ENCODE measurements at regions of chr11 and their contacts with region 1.

Region 1: GRCh38 chr11:62645956-62646824 is at the start of gene GANAB:
- DNase-seq: peak; percentile 100
- H3K4me3 ChIP-seq: peak within 1 kb of the TSS; percentile 63 to 98 (median 86)
- H3K27ac ChIP-seq: peak within 1 kb of the TSS; percentile 89 to 96 (median 94)
- H3K4me1 ChIP-seq: peaks cover 0 to 32% (median 23%) of the 10 kb centered on the region in 4 donors
- H3K27me3 ChIP-seq: no peaks in the 10 kb centered on the region
- CTCF ChIP-seq: no peak
- EP300 ChIP-seq: no peak
- POLR2A ChIP-seq: peak; percentile 81 to 86
- total RNA-seq, gene GANAB: 67.4 to 111 (median 77.9) TPM

Region 2: DNA sequence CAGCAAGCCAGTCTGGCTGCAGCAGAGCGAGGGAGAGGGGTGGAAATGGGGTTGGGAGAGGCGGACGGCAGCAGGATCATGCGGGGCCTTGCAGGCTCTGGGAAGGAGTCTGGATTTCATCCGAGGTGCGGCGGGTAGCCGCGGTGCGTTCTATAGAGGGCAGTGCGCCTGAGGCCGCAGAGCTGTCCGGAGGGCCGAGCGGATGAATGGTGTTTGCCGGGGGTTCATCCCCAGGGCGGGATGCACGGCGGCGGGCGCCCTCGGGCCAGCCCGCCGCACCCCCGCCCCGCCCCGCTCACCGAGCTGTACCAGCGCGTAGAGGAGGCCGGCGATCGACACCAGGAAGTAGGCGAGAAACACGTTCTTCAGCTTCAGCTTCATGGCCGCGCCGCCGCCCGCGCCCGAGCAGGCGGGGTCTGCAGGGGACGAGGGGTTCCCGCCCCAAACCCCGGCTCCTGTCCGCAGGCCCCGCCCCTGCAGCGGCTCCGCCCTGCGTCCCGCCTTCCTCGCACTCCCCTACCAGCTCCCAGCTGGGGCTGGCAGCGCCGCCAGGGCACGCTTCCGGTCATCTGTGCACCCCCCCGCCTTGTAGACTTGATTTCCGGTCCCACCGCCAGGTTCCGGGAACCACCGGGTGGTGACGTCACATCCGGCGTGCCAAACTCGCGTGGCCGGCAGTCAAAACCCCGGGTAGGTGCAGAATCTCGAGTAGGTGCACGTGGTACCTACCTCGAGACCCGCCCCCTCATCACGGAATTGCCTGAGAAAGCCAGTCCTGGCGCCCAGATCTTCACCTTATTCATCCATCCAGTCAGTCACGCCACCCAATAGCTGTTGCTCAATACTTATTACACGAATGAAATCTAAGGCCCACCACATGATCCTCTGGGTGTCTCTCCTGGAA is 24.4 kb before region 1 on chr11 and contains the start of gene B3GAT3:
- intact Hi-C with region 1: loop called (anchors 2 kb)
- DNase-seq: peak; percentile 99
- H3K4me3 ChIP-seq: peak within 1 kb of the TSS; percentile 60 to 87 (median 74)
- H3K27ac ChIP-seq: peak within 1 kb of the TSS; percentile 84 to 93 (median 90)
- H3K4me1 ChIP-seq: peaks cover 0 to 23% (median 19%) of the 10 kb centered on the region in 4 donors
- H3K27me3 ChIP-seq: no peaks in the 10 kb centered on the region
- CTCF ChIP-seq: no peak
- EP300 ChIP-seq: peak in 2 of 4 donors; percentile 53 to 88
- POLR2A ChIP-seq: peak; percentile 76
- total RNA-seq, gene B3GAT3: 11.1 to 26.3 (median 16.8) TPM

Region 3: GRCh38 chr11:62665075-62665598 is 18.9 kb after region 1 on chr11 and contains the starts of genes C11orf98 and CSKMT:
- intact Hi-C with region 1: loop called (anchors 2 kb)
- DNase-seq: peak; percentile 98
- H3K4me3 ChIP-seq: peak within 1 kb of the TSS; percentile 74 to 89 (median 86)
- H3K27ac ChIP-seq: peak within 1 kb of the TSS; percentile 91 to 97 (median 94)
- H3K4me1 ChIP-seq: peaks cover 0 to 40% (median 34%) of the 10 kb centered on the region in 4 donors
- H3K27me3 ChIP-seq: no peaks in the 10 kb centered on the region
- CTCF ChIP-seq: no peak
- EP300 ChIP-seq: no peak
- POLR2A ChIP-seq: peak; percentile 99
- total RNA-seq, gene C11orf98: 24.6 to 47.4 (median 26.9) TPM
- total RNA-seq, gene CSKMT: 2.9 to 6.1 (median 4.0) TPM

Region 4: DNA sequence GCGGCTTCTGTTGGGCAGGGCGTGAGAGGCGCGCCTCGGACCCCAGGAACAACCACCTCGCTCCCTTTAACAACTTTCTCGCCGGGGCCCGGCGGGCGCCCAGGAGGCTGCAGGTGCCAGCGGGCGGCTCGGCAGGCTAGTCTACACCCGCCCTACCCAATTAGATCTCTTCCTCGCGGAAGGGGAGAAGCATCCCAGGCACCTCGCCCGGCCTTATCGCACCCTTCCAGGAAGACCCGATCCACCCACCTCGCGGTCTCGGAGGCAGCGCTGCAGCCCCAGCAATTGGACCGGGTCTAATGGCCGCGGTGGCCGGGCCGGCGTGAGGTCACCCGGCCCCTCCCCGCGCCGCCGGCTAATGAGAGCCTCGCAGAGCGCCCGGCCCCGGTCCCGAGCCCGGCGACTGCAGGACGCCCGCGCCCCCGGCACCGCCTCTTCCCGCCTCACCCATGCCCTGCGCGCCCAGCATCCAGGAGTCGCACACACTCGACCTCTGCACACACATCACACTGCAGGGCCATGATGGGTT is 968.0 kb after region 1 on chr11 and contains the start of gene PLAAT3:
- intact Hi-C with region 1: no loop called
- DNase-seq: peak; percentile 87
- H3K4me3 ChIP-seq: peak within 1 kb of the TSS; percentile 57 to 81 (median 71)
- H3K27ac ChIP-seq: peak within 1 kb of the TSS; percentile 79 to 85 (median 84)
- H3K4me1 ChIP-seq: peaks cover 0 to 42% (median 38%) of the 10 kb centered on the region in 4 donors
- H3K27me3 ChIP-seq: no peaks in the 10 kb centered on the region
- CTCF ChIP-seq: no peak
- EP300 ChIP-seq: no peak
- POLR2A ChIP-seq: peak in 1 of 2 donors; percentile 40
- total RNA-seq, gene PLAAT3: 34.9 to 59.9 (median 47.9) TPM

Measured in sigmoid colon (tissue), 7 donors.